ENCODE measurements at regions of chr2 and their contacts with region 1.

Region 1: DNA sequence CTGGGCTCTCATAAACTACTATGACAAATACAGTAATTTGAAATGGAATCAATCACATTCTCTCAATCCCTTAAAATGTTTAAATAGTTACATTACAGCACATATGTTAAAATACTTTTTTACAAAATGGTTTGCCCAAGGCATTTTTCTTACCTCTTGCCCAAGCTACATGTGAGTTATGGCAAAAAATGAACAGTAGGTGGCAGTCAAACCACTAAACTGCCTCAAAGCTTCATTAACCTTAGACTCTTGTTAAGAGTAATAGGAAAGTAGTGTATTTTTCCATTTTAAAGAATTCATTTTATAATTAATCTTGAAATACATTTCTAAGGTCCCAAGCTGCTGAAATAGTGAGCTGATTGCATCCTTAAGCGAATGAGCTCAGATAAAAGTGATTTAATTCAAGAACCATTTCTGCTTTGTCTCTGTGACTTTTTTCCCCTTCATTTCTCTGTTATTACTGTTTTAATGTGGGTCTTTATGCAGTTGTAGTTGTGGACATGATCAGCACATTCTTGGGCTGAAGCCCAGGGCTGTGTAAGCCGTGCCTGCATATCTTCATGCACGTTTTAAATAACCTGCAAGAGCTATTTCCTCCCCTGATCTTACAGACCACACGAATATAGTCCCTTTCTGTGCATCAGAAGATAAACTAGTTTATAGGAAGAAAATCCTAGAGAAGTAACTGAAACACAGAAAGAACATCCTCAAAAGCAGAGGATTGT is 311.8 kb downstream of the LNPK start:
- DNase-seq: peak; percentile 48
- ATAC-seq: no peak
- H3K4me3 ChIP-seq: no peak overlapping the region
- H3K4me3 Mint-ChIP-seq: no peak overlapping the region
- H3K27ac ChIP-seq: no peak overlapping the region
- H3K27ac Mint-ChIP-seq: no peak overlapping the region
- H3K4me1 ChIP-seq: no peaks in the 10 kb centered on the region
- H3K4me1 Mint-ChIP-seq: no peaks in the 10 kb centered on the region
- H3K27me3 ChIP-seq: no peaks in the 10 kb centered on the region
- H3K27me3 Mint-ChIP-seq: peaks cover 4% of the 10 kb centered on the region
- CTCF ChIP-seq: peak; percentile 77

Region 2: GRCh38 chr2:175677880-175678279 is 12.4 kb before region 1 on chr2:
- CTCF ChIA-PET with region 1: interaction called, 18 read pairs
- POLR2A ChIA-PET with region 1: no interaction called
- intact Hi-C with region 1: no loop called
- DNase-seq: no peak
- ATAC-seq: no peak
- H3K4me3 ChIP-seq: no peak overlapping the region
- H3K4me3 Mint-ChIP-seq: no peak overlapping the region
- H3K27ac ChIP-seq: no peak overlapping the region
- H3K27ac Mint-ChIP-seq: no peak overlapping the region
- H3K4me1 ChIP-seq: no peaks in the 10 kb centered on the region
- H3K4me1 Mint-ChIP-seq: no peaks in the 10 kb centered on the region
- H3K27me3 ChIP-seq: no peaks in the 10 kb centered on the region
- H3K27me3 Mint-ChIP-seq: peaks cover 3% of the 10 kb centered on the region
- CTCF ChIP-seq: no peak

Region 3: GRCh38 chr2:176096986-176097819 is 406.9 kb after region 1 on chr2:
- CTCF ChIA-PET with region 1: interaction called, 72 read pairs
- POLR2A ChIA-PET with region 1: no interaction called
- intact Hi-C with region 1: no loop called
- DNase-seq: peak; percentile 71
- ATAC-seq: peak; percentile 65
- H3K4me3 ChIP-seq: peak overlapping the region; percentile 4 to 42 (median 17)
- H3K4me3 Mint-ChIP-seq: peak overlapping the region; percentile 75
- H3K27ac ChIP-seq: no peak overlapping the region
- H3K27ac Mint-ChIP-seq: peak overlapping the region; percentile 6
- H3K4me1 ChIP-seq: peaks cover 24 to 38% of the 10 kb centered on the region in 2 donors
- H3K4me1 Mint-ChIP-seq: peaks cover 24% of the 10 kb centered on the region
- H3K27me3 ChIP-seq: peaks cover 0 to 89% (median 73%) of the 10 kb centered on the region in 4 experiments
- H3K27me3 Mint-ChIP-seq: peaks cover 74% of the 10 kb centered on the region
- CTCF ChIP-seq: peak; percentile 76

Region 4: DNA sequence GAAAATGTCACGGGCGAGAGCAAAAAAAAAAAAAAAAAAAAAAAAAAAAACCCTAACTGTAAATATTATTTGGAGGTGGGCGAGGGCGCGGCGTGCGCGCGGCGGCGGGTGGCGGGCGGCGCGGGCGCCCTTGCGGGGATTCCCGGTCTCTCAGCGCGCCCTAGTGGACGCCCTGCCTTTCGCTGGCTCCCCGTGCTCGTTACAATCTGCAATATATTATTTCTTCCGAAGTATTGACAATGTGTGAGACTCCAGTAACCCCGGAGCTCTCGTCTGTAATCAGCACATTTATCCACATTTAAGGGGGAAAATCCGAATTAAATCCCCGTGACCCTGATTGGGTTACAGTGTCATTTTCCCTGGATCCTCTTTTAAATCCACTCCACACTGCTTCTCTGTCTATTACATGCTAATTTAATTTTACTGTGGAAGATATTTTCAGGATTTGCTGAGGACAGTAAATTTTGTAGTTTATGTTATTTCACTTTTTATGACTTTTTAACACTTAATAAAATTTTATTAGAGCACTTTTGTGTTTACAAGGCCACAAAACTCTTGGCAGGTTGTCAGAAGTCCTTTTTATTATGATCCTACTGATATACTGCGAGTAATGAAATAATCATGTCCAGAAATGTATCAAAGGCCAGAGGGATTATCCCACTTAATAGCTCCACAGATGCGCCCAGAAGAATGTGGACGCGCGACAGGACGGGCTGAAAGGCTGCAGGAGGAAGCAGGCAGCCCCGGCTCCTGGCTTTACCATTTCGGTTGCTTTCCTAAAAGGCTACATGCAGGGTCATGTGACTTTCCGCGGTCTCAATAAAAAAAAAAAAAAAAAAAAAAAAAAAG is 948.1 kb after region 1 on chr2:
- CTCF ChIA-PET with region 1: no interaction called
- POLR2A ChIA-PET with region 1: no interaction called
- intact Hi-C with region 1: loop called (anchors 5 kb)
- DNase-seq: peak; percentile 65
- ATAC-seq: peak; percentile 51
- H3K4me3 ChIP-seq: peak overlapping the region in 4 of 5 experiments; percentile 31 to 62 (median 50)
- H3K4me3 Mint-ChIP-seq: peak overlapping the region; percentile 73
- H3K27ac ChIP-seq: no peak overlapping the region
- H3K27ac Mint-ChIP-seq: no peak overlapping the region
- H3K4me1 ChIP-seq: peaks cover 11 to 12% of the 10 kb centered on the region in 2 donors
- H3K4me1 Mint-ChIP-seq: peaks cover 8% of the 10 kb centered on the region
- H3K27me3 ChIP-seq: peaks cover 0 to 50% (median 39%) of the 10 kb centered on the region in 4 experiments
- H3K27me3 Mint-ChIP-seq: peaks cover 66% of the 10 kb centered on the region
- CTCF ChIP-seq: peak; percentile 72

Region 5: DNA sequence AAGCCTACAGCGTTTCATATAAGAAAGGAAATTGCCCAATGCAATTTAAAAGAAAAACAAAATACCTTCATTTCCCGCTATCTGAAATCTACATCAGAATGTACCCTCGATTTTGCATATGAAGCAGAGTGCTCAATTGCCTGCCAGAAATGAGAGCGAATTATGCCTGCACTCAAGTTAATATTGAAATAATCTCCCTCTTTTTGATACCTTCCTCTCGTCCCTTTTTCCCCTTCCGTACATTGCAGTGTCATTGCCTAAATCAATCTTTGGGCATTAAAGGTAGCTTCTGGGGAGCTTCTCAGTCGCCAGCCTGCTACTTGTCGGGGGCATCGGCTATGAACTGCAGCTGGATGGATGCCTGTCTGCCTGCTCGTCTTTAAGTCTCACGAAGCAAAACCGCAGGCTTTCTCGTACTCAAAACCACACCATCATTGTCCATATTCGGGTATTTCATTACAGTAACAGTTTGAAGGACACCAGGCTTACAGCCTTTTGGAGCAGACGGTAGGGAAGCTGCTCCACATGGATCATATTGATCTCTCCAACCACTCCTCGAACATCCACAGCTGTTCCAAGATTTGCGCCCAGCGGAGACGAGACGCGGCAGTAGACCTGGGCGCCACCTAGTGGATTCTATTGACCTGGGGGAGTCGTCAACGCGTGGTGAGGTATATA is 1458.3 kb after region 1 on chr2:
- CTCF ChIA-PET with region 1: interaction called, 4 read pairs
- POLR2A ChIA-PET with region 1: no interaction called
- intact Hi-C with region 1: loop called (anchors 5 kb)
- DNase-seq: peak; percentile 85
- ATAC-seq: peak; percentile 92
- H3K4me3 ChIP-seq: peak overlapping the region; percentile 42 to 94 (median 67)
- H3K4me3 Mint-ChIP-seq: peak overlapping the region; percentile 92
- H3K27ac ChIP-seq: no peak overlapping the region
- H3K27ac Mint-ChIP-seq: peak overlapping the region; percentile 2
- H3K4me1 ChIP-seq: peaks cover 9 to 13% of the 10 kb centered on the region in 2 donors
- H3K4me1 Mint-ChIP-seq: peaks cover 11% of the 10 kb centered on the region
- H3K27me3 ChIP-seq: peaks cover 0 to 13% (median 10%) of the 10 kb centered on the region in 4 experiments
- H3K27me3 Mint-ChIP-seq: peaks cover 36% of the 10 kb centered on the region
- CTCF ChIP-seq: peak; percentile 99

Measured in B cell (primary cell).